Activated T-helper 2 cell treated with anti-CD3 and anti-CD28 coated beads, Interferon-gamma antibody, Interleukin-2, Interleukin-4, amounts not matched to agents 10 μg/mL and 5 μg/mL and 100 μg/mL, durations not matched to agents 14 hours and 24 hours and 36 hours (primary cell): ENCODE measurements at regions of chr11 and their contacts with region 1.

Region 1: GRCh38 chr11:86955361-86956120 is at the start of gene FZD4:
- DNase-seq: peak; percentile 49
- H3K4me3 Mint-ChIP-seq: peak within 1 kb of the TSS; percentile 92
- H3K27ac Mint-ChIP-seq: no peak within 1 kb of the TSS
- H3K4me1 Mint-ChIP-seq: peaks cover 10% of the 10 kb centered on the region
- H3K27me3 Mint-ChIP-seq: peaks cover 76% of the 10 kb centered on the region
- total RNA-seq, gene FZD4: 0.11 and 0.16 TPM in 2 replicates

Region 2: DNA sequence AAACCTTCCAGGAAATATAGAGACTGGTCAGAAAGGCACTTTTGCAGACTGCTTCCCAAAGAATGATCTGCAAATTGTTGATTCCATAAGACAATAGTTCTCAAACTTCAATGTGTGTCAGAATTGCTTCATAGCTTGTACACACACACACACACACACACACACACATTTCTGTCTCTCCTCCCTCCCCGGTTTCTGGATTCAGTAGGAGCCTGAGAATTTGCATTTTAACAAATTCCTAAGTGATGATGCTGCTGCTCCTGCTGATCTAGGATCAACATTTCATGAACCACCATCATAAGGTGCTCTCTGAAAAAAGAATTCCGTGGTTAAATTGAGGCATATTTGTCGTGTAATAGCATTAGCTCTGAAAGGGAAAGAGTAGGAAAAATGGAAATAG is 35.0 kb after region 1 on chr11:
- intact Hi-C with region 1: loop called (anchors 5 kb)
- DNase-seq: no peak
- H3K4me3 Mint-ChIP-seq: no peak overlapping the region
- H3K27ac Mint-ChIP-seq: no peak overlapping the region
- H3K4me1 Mint-ChIP-seq: peaks cover 3% of the 10 kb centered on the region
- H3K27me3 Mint-ChIP-seq: peaks cover 10% of the 10 kb centered on the region

Region 3: DNA sequence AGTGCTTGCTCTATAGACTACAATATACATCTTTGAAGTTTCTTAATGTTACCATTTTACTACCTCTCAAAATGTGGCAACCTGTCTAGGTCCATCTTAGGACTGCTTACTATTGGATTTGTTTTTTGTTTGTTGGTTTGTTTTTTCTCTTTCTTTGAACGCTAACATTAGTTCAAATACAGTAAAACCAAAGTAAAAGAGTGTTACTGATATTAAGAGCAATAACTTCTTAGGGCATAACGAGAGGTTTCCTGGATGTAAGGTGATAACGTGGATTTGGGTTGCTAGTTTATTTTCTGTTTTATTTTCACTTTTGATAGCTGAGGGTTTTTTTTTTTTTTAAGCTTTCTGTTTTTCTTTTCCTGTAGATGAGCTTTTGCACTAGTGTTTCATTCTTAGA is 125.8 kb after region 1 on chr11:
- intact Hi-C with region 1: loop called (anchors 5 kb)
- DNase-seq: no peak
- H3K4me3 Mint-ChIP-seq: peak overlapping the region; percentile 75
- H3K27ac Mint-ChIP-seq: peak overlapping the region; percentile 91
- H3K4me1 Mint-ChIP-seq: peaks cover 29% of the 10 kb centered on the region
- H3K27me3 Mint-ChIP-seq: no peaks in the 10 kb centered on the region

Region 4: DNA sequence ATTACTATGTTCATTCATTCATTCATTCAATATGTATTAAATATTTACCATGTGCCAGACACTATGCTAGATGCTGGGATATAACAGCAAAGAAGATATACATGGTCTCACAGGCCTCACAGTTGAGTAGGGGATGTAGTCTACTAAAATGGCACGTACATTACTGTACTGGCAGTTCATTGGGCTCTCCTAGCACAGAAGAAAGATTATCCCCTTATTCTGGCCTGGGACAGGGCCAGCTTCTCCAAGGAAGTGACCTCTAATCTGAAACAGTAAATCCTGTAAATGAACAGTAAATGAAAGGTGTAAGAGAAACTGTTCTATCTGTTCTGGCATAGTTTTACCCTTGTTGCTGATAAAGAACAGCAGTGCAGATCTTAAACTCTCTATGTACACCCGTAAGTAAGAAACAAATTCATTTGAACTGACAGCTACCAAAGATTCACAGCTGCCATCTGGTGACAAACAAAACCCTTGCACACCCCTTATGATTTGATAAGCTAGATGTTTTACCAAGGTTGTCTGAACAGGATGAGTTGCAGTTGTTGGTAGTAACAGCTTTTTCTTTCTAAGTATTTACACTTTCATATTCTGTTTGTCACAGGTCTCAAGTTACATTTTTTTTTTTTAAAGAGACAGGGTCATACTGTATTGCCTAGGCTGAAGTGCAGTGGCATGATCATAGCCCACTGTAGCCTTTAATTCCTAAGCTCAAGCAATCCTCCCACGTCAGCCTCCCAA is 345.3 kb after region 1 on chr11:
- intact Hi-C with region 1: loop called (anchors 5 kb)
- DNase-seq: no peak
- H3K4me3 Mint-ChIP-seq: no peak overlapping the region
- H3K27ac Mint-ChIP-seq: no peak overlapping the region
- H3K4me1 Mint-ChIP-seq: peaks cover 13% of the 10 kb centered on the region
- H3K27me3 Mint-ChIP-seq: no peaks in the 10 kb centered on the region